Activated CD8-positive, alpha-beta T cell treated with anti-CD3 and anti-CD28 coated beads, Interleukin-2, amount 10 ng/mL, durations not matched to agents 7 days and 5 days (primary cell): ENCODE measurements at regions of chr7 and their contacts with region 1.

Region 1: GRCh38 chr7:55629051-55629677 is 56.9 kb upstream of the VOPP1 start:
- DNase-seq: no peak
- ATAC-seq: no peak
- H3K4me3 Mint-ChIP-seq: no peak overlapping the region
- H3K27ac Mint-ChIP-seq: no peak overlapping the region
- H3K4me1 Mint-ChIP-seq: no peaks in the 10 kb centered on the region
- H3K27me3 Mint-ChIP-seq: peaks cover 11% of the 10 kb centered on the region

Region 2: GRCh38 chr7:55593515-55594318 is 35.4 kb before region 1 on chr7:
- CTCF ChIA-PET with region 1: no interaction called
- POLR2A ChIA-PET with region 1: no interaction called
- DNase-seq: peak; percentile 72
- ATAC-seq: peak; percentile 65
- H3K4me3 Mint-ChIP-seq: no peak overlapping the region
- H3K27ac Mint-ChIP-seq: no peak overlapping the region
- H3K4me1 Mint-ChIP-seq: no peaks in the 10 kb centered on the region
- H3K27me3 Mint-ChIP-seq: no peaks in the 10 kb centered on the region

Region 3: DNA sequence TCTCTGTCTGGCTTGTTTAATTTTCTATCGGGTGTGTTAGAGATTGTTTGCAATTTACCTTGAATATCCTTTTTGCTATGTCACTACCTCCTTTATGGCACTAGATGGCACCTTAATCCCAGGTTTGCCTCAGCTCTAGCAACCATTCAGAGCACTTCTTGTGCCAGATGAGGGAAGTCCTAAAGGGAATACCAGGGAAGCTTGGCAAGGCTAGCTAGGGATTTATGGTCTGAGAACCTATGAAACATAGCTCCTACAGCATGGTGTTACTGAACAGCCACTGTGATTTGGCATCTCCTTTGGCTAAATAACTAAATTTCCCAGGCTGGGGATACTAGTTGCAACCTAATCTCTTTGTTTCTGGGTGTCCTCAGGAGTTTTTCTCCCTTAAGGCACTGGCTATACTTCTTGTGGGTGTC is 12.1 kb after region 1 on chr7:
- CTCF ChIA-PET with region 1: interaction called, 13 read pairs
- POLR2A ChIA-PET with region 1: interaction called, 3 read pairs
- DNase-seq: peak; percentile 61
- ATAC-seq: peak; percentile 91
- H3K4me3 Mint-ChIP-seq: no peak overlapping the region
- H3K27ac Mint-ChIP-seq: peak overlapping the region; percentile 62
- H3K4me1 Mint-ChIP-seq: peaks cover 11% of the 10 kb centered on the region
- H3K27me3 Mint-ChIP-seq: peaks cover 2% of the 10 kb centered on the region